PC-3 (cell line): ENCODE measurements at regions of chr1 and their contacts with region 1.

Region 1: DNA sequence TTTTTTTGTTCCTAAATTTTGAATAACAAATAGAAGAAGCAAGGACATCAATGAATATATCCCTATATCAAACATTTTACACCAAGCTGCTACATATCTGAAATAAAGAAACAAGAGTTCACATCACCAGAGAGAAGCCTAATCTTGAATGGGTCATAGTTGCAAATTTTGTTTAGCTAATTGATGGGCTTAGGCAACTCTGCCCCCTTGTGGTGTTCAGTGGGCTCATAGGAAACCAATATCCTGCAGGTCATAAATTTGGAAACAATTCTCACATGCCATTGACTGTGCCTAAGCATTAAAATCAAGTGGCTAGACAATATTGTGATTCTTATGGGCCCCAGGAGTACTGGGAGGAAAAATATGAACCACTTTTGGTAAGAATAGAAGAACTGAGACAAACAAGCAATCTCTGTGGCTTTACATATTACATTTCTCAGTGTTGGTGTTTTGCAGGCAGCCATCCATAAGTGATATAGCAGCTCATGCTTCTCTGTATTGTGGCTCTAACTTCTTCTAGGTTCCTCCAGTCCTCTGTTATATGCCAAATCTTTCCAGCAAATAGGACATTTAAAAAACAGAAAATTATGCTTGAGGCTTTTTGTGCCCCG is 1262.8 kb upstream of the PRMT6 start:
- DNase-seq: peak; percentile 72
- ATAC-seq: peak; percentile 70
- H3K4me3 ChIP-seq: no peak overlapping the region
- H3K27ac ChIP-seq: no peak overlapping the region
- H3K4me1 ChIP-seq: no peaks in the 10 kb centered on the region
- H3K27me3 ChIP-seq: no peaks in the 10 kb centered on the region
- CTCF ChIP-seq: peak; percentile 89

Region 2: GRCh38 chr1:104648269-104648691 is 1145.4 kb before region 1 on chr1:
- CTCF ChIA-PET with region 1: no interaction called
- POLR2A ChIA-PET with region 1: no interaction called
- intact Hi-C with region 1: loop called (anchors 5 kb)
- DNase-seq: peak; percentile 44
- ATAC-seq: peak; percentile 31; the same call in 1 of the 2 replicates
- H3K4me3 ChIP-seq: no peak overlapping the region
- H3K27ac ChIP-seq: no peak overlapping the region
- H3K4me1 ChIP-seq: peaks cover 10% of the 10 kb centered on the region
- H3K27me3 ChIP-seq: no peaks in the 10 kb centered on the region
- CTCF ChIP-seq: peak; percentile 88

Region 3: GRCh38 chr1:105459759-105460158 is 333.9 kb before region 1 on chr1:
- CTCF ChIA-PET with region 1: no interaction called
- POLR2A ChIA-PET with region 1: no interaction called
- intact Hi-C with region 1: loop called (anchors 10 kb)
- DNase-seq: no peak
- ATAC-seq: no peak
- H3K4me3 ChIP-seq: no peak overlapping the region
- H3K27ac ChIP-seq: no peak overlapping the region
- H3K4me1 ChIP-seq: no peaks in the 10 kb centered on the region
- H3K27me3 ChIP-seq: no peaks in the 10 kb centered on the region
- CTCF ChIP-seq: no peak

Region 4: GRCh38 chr1:105608713-105609112 is 184.9 kb before region 1 on chr1:
- CTCF ChIA-PET with region 1: no interaction called
- POLR2A ChIA-PET with region 1: no interaction called
- intact Hi-C with region 1: loop called (anchors 5 kb)
- DNase-seq: peak; percentile 41
- ATAC-seq: peak; percentile 63
- H3K4me3 ChIP-seq: no peak overlapping the region
- H3K27ac ChIP-seq: no peak overlapping the region
- H3K4me1 ChIP-seq: no peaks in the 10 kb centered on the region
- H3K27me3 ChIP-seq: no peaks in the 10 kb centered on the region
- CTCF ChIP-seq: peak; percentile 62

Region 5: GRCh38 chr1:105779727-105780126 is 13.9 kb before region 1 on chr1:
- CTCF ChIA-PET with region 1: no interaction called
- POLR2A ChIA-PET with region 1: no interaction called
- intact Hi-C with region 1: no loop called
- DNase-seq: no peak
- ATAC-seq: no peak
- H3K4me3 ChIP-seq: no peak overlapping the region
- H3K27ac ChIP-seq: no peak overlapping the region
- H3K4me1 ChIP-seq: no peaks in the 10 kb centered on the region
- H3K27me3 ChIP-seq: no peaks in the 10 kb centered on the region
- CTCF ChIP-seq: no peak

Region 6: GRCh38 chr1:105874621-105875020 is 81.0 kb after region 1 on chr1:
- CTCF ChIA-PET with region 1: no interaction called
- POLR2A ChIA-PET with region 1: no interaction called
- intact Hi-C with region 1: no loop called
- DNase-seq: no peak
- ATAC-seq: no peak
- H3K4me3 ChIP-seq: no peak overlapping the region
- H3K27ac ChIP-seq: no peak overlapping the region
- H3K4me1 ChIP-seq: no peaks in the 10 kb centered on the region
- H3K27me3 ChIP-seq: no peaks in the 10 kb centered on the region
- CTCF ChIP-seq: no peak

Region 7: DNA sequence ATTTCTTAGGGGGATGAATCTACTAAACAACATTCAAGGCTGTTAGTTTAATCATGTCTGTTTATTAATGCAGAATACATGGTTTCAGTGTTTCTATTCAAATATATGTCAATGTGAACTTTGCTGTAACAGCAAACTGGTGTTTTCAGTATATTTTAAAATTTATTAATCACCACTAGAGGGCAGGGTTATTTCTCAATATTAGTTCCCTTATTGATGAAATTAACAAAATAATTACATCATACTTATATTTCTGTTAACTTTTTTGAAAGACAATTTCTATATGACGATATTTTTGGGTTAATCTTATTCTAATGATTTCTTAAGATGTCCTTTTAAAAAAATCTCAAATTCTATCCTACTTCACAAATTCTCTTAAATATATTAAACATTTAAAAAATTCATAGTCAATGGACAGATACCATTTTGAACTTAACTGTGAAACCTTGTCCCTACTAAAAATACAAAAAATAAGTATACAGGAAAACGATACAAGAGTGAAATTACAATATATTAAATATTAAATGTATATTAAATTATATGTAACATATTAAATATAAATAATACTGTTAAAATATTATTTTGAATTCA is 228.8 kb after region 1 on chr1:
- CTCF ChIA-PET with region 1: no interaction called
- POLR2A ChIA-PET with region 1: no interaction called
- intact Hi-C with region 1: no loop called
- DNase-seq: peak; percentile 51
- ATAC-seq: no peak
- H3K4me3 ChIP-seq: no peak overlapping the region
- H3K27ac ChIP-seq: no peak overlapping the region
- H3K4me1 ChIP-seq: no peaks in the 10 kb centered on the region
- H3K27me3 ChIP-seq: no peaks in the 10 kb centered on the region
- CTCF ChIP-seq: peak; percentile 68

Region 8: GRCh38 chr1:106268056-106268455 is 474.4 kb after region 1 on chr1:
- CTCF ChIA-PET with region 1: no interaction called
- POLR2A ChIA-PET with region 1: no interaction called
- intact Hi-C with region 1: loop called (anchors 5 kb)
- DNase-seq: peak; percentile 71
- ATAC-seq: peak; percentile 86
- H3K4me3 ChIP-seq: no peak overlapping the region
- H3K27ac ChIP-seq: no peak overlapping the region
- H3K4me1 ChIP-seq: no peaks in the 10 kb centered on the region
- H3K27me3 ChIP-seq: no peaks in the 10 kb centered on the region
- CTCF ChIP-seq: peak; percentile 73